ENCODE measurements at regions of chr1 and their contacts with region 1.

Region 1: GRCh38 chr1:26417111-26417759 is 6.6 kb downstream of the LIN28A start:
- DNase-seq: peak; percentile 89
- H3K4me3 Mint-ChIP-seq: no peak overlapping the region
- H3K27ac Mint-ChIP-seq: no peak overlapping the region
- H3K4me1 Mint-ChIP-seq: peaks cover 2% of the 10 kb centered on the region
- H3K27me3 Mint-ChIP-seq: peaks cover 15% of the 10 kb centered on the region

Region 2: GRCh38 chr1:26094076-26094669 is 323.1 kb before region 1 on chr1:
- CTCF ChIA-PET with region 1: no interaction called
- POLR2A ChIA-PET with region 1: no interaction called
- intact Hi-C with region 1: no loop called
- DNase-seq: no peak
- H3K4me3 Mint-ChIP-seq: no peak overlapping the region
- H3K27ac Mint-ChIP-seq: no peak overlapping the region
- H3K4me1 Mint-ChIP-seq: peaks cover 4% of the 10 kb centered on the region
- H3K27me3 Mint-ChIP-seq: peaks cover 15% of the 10 kb centered on the region

Region 3: DNA sequence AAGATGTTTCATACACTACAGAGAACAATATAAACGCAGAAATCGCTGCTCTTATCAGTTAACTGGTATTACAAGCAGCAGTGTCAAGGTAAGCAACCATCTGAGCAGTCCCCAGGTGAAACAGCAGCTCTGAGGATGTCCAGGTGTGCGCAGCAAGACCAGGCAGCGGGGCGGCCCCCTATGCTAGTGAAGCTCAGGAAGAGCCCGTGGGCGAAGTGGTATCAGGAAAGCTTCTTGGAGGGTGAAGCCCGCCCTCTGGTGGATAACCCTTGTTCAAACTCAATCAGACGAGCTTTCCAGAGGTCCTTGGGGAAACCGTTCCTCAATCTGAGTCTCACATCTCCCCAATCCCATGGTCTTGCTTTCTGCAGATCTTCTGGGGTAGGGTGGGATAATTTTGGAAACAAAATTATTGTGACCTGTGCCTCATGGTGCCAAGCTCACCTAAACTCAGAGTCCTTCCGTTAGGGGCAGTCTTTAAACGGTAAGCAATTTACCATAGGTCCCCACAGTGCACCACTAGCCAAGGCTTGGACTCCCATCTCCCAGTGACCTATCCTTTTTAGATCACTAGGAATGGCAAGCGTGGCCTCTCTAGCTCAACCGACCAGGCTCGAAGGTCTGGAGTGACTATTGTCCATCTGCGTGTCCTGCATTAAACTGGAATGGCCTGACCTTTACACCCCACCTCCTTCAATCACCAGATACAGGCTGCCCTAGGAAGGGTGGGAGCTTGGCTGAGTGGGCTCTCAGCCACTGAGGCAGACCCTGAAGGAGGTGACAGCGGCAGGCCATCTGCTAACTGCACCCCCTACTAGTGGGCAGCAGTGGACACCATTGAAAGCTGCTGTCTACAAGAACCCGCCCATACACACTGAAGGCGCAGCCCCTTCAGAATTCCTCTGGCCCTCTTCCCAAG is 271.9 kb before region 1 on chr1:
- CTCF ChIA-PET with region 1: interaction called, 10 read pairs
- POLR2A ChIA-PET with region 1: no interaction called
- intact Hi-C with region 1: no loop called
- DNase-seq: peak; percentile 83
- H3K4me3 Mint-ChIP-seq: no peak overlapping the region
- H3K27ac Mint-ChIP-seq: no peak overlapping the region
- H3K4me1 Mint-ChIP-seq: peaks cover 4% of the 10 kb centered on the region
- H3K27me3 Mint-ChIP-seq: no peaks in the 10 kb centered on the region

Region 4: GRCh38 chr1:26279456-26280332 is 137.5 kb before region 1 on chr1 and contains the start of gene SH3BGRL3:
- CTCF ChIA-PET with region 1: interaction called, 35 read pairs
- POLR2A ChIA-PET with region 1: no interaction called
- intact Hi-C with region 1: no loop called
- DNase-seq: peak; percentile 89
- H3K4me3 Mint-ChIP-seq: peak within 1 kb of the TSS; percentile 89
- H3K27ac Mint-ChIP-seq: peak within 1 kb of the TSS; percentile 94
- H3K4me1 Mint-ChIP-seq: peaks cover 87% of the 10 kb centered on the region
- H3K27me3 Mint-ChIP-seq: no peaks in the 10 kb centered on the region
- total RNA-seq, gene SH3BGRL3: 305 to 320 TPM

Region 5: GRCh38 chr1:26296340-26297056 is 120.7 kb before region 1 on chr1:
- CTCF ChIA-PET with region 1: no interaction called
- POLR2A ChIA-PET with region 1: no interaction called
- intact Hi-C with region 1: no loop called
- DNase-seq: no peak
- H3K4me3 Mint-ChIP-seq: no peak overlapping the region
- H3K27ac Mint-ChIP-seq: no peak overlapping the region
- H3K4me1 Mint-ChIP-seq: peaks cover 13% of the 10 kb centered on the region
- H3K27me3 Mint-ChIP-seq: no peaks in the 10 kb centered on the region

Region 6: GRCh38 chr1:26358411-26359384 is 58.5 kb before region 1 on chr1:
- CTCF ChIA-PET with region 1: interaction called, 27 read pairs
- POLR2A ChIA-PET with region 1: interaction called, 3 read pairs
- intact Hi-C with region 1: loop called (anchors 5 kb)
- DNase-seq: peak; percentile 85
- H3K4me3 Mint-ChIP-seq: peak overlapping the region; percentile 6
- H3K27ac Mint-ChIP-seq: no peak overlapping the region
- H3K4me1 Mint-ChIP-seq: peaks cover 40% of the 10 kb centered on the region
- H3K27me3 Mint-ChIP-seq: peaks cover 7% of the 10 kb centered on the region

Region 7: GRCh38 chr1:26378088-26378878 is 39.0 kb before region 1 on chr1:
- CTCF ChIA-PET with region 1: interaction called, 20 read pairs
- POLR2A ChIA-PET with region 1: no interaction called
- intact Hi-C with region 1: no loop called
- DNase-seq: peak; percentile 81
- H3K4me3 Mint-ChIP-seq: peak overlapping the region; percentile 30
- H3K27ac Mint-ChIP-seq: peak overlapping the region; percentile 57
- H3K4me1 Mint-ChIP-seq: peaks cover 60% of the 10 kb centered on the region
- H3K27me3 Mint-ChIP-seq: no peaks in the 10 kb centered on the region

Region 8: GRCh38 chr1:26449868-26450267 is 32.6 kb after region 1 on chr1:
- CTCF ChIA-PET with region 1: interaction called, 10 read pairs
- POLR2A ChIA-PET with region 1: no interaction called
- intact Hi-C with region 1: no loop called
- DNase-seq: no peak
- H3K4me3 Mint-ChIP-seq: no peak overlapping the region
- H3K27ac Mint-ChIP-seq: no peak overlapping the region
- H3K4me1 Mint-ChIP-seq: no peaks in the 10 kb centered on the region
- H3K27me3 Mint-ChIP-seq: no peaks in the 10 kb centered on the region

Region 9: GRCh38 chr1:26838474-26839338 is 421.5 kb after region 1 on chr1:
- CTCF ChIA-PET with region 1: no interaction called
- POLR2A ChIA-PET with region 1: no interaction called
- intact Hi-C with region 1: no loop called
- DNase-seq: peak; percentile 88
- H3K4me3 Mint-ChIP-seq: peak overlapping the region; percentile 12
- H3K27ac Mint-ChIP-seq: peak overlapping the region; percentile 90
- H3K4me1 Mint-ChIP-seq: peaks cover 51% of the 10 kb centered on the region
- H3K27me3 Mint-ChIP-seq: no peaks in the 10 kb centered on the region